Calu3 (cell line): ENCODE measurements at regions of chr11 and their contacts with region 1.

Region 1: GRCh38 chr11:44621140-44621681 is 55.7 kb downstream of the CD82 start:
- DNase-seq: peak; percentile 78
- H3K4me3 Mint-ChIP-seq: no peak overlapping the region
- H3K27ac Mint-ChIP-seq: no peak overlapping the region
- H3K4me1 Mint-ChIP-seq: no peaks in the 10 kb centered on the region
- H3K27me3 Mint-ChIP-seq: peaks cover 60% of the 10 kb centered on the region
- CTCF ChIP-seq: peak; percentile 95

Region 2: DNA sequence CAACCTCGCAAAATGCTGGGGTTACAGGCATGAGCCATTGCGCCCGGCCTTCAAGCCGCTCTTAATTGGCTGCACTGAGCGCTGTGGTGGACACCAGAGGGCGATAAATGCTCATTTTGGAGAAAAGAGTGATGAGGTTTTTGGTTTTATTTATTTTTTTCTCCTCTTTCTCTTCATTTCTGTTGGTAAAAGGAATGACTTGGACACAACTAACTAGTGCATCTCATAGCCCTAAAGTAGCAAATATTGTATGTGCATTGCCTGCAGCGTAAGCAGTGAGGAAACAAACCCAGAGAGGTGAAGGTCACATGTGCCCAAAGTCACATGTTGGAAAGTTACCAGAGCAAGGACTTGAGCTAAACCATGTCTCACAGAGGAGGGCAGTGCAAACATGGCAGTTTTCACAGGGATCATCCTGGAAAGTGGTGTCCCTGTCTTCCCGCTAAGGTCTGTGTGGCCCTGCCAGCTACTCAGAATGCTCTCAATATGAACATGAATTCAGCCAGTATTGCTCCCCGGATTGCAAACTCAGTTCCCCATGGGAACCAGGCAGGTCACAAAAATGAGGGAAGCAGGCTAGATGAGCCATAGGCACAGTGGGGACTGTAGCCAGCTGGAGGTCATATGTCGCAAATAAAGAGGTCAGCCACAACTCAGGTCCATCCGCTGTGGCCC is 64.3 kb before region 1 on chr11:
- CTCF ChIA-PET with region 1: interaction called, 40 read pairs
- intact Hi-C with region 1: loop called (anchors 1 kb)
- DNase-seq: peak; percentile 70
- H3K4me3 Mint-ChIP-seq: no peak overlapping the region
- H3K27ac Mint-ChIP-seq: no peak overlapping the region
- H3K4me1 Mint-ChIP-seq: peaks cover 8% of the 10 kb centered on the region
- H3K27me3 Mint-ChIP-seq: peaks cover 21% of the 10 kb centered on the region
- CTCF ChIP-seq: peak; percentile 79

Region 3: GRCh38 chr11:44565211-44565952 is 55.8 kb before region 1 on chr11 and contains the start of gene CD82:
- CTCF ChIA-PET with region 1: interaction called, 14 read pairs
- intact Hi-C with region 1: no loop called
- DNase-seq: peak; percentile 100
- H3K4me3 Mint-ChIP-seq: peak within 1 kb of the TSS; percentile 83
- H3K27ac Mint-ChIP-seq: peak within 1 kb of the TSS; percentile 69
- H3K4me1 Mint-ChIP-seq: peaks cover 39% of the 10 kb centered on the region
- H3K27me3 Mint-ChIP-seq: no peaks in the 10 kb centered on the region
- CTCF ChIP-seq: no peak
- total RNA-seq, gene CD82: 26.4 and 32.6 TPM in 2 replicates

Region 4: GRCh38 chr11:44775366-44775984 is 154.3 kb after region 1 on chr11:
- CTCF ChIA-PET with region 1: interaction called, 4 read pairs
- intact Hi-C with region 1: loop called (anchors 1 kb)
- DNase-seq: peak; percentile 83
- H3K4me3 Mint-ChIP-seq: no peak overlapping the region
- H3K27ac Mint-ChIP-seq: no peak overlapping the region
- H3K4me1 Mint-ChIP-seq: no peaks in the 10 kb centered on the region
- H3K27me3 Mint-ChIP-seq: peaks cover 55% of the 10 kb centered on the region
- CTCF ChIP-seq: peak; percentile 80

Region 5: DNA sequence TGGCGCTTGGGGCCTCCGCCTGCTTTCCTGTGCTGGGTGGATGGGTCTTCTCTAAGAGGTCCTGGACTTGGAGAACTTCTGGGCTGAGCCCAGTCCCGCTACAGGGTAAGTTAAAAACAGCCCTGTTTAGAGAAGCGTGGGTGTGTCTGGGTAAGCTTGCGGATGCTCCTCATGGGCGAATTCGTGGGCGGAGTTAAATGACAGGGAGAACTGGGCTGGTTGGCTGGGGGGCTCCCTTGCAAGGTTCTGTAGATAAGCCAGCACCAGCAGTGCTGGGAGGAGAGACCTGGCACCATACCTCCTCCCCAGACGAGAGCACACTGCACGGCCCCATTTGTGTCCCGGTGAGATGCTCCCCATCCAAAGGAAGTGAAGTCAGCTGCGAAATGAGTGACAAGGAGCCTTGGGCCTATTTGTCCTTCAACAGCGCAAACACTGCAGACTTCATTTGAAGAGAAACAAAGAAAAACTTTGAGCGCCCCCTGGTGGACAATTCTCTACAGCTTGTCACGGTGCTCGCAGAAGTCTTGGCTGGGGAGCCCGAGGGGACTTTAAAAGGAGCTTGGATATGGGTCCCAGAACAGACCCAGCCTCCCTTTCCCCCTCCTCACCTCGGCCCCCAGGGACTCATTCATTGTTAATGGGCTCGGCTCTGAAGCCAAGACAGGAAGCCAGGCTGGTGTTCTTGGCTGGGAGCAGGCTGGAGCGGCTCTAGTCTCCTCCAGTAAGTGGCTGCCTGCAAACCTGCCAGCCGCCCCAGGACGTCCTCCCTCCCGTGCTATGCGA is 290.0 kb after region 1 on chr11:
- CTCF ChIA-PET with region 1: interaction called, 8 read pairs
- intact Hi-C with region 1: loop called (anchors 1 kb)
- DNase-seq: peak; percentile 90
- H3K4me3 Mint-ChIP-seq: no peak overlapping the region
- H3K27ac Mint-ChIP-seq: no peak overlapping the region
- H3K4me1 Mint-ChIP-seq: no peaks in the 10 kb centered on the region
- H3K27me3 Mint-ChIP-seq: peaks cover 73% of the 10 kb centered on the region
- CTCF ChIP-seq: peak; percentile 77

Region 6: GRCh38 chr11:45102810-45103621 is 481.8 kb after region 1 on chr11:
- CTCF ChIA-PET with region 1: no interaction called
- intact Hi-C with region 1: no loop called
- DNase-seq: peak; percentile 62
- H3K4me3 Mint-ChIP-seq: no peak overlapping the region
- H3K27ac Mint-ChIP-seq: no peak overlapping the region
- H3K4me1 Mint-ChIP-seq: peaks cover 7% of the 10 kb centered on the region
- H3K27me3 Mint-ChIP-seq: peaks cover 80% of the 10 kb centered on the region
- CTCF ChIP-seq: peak; percentile 93